SK-N-SH (cell line): ENCODE measurements at regions of chr19 and their contacts with region 1.

Region 1: DNA sequence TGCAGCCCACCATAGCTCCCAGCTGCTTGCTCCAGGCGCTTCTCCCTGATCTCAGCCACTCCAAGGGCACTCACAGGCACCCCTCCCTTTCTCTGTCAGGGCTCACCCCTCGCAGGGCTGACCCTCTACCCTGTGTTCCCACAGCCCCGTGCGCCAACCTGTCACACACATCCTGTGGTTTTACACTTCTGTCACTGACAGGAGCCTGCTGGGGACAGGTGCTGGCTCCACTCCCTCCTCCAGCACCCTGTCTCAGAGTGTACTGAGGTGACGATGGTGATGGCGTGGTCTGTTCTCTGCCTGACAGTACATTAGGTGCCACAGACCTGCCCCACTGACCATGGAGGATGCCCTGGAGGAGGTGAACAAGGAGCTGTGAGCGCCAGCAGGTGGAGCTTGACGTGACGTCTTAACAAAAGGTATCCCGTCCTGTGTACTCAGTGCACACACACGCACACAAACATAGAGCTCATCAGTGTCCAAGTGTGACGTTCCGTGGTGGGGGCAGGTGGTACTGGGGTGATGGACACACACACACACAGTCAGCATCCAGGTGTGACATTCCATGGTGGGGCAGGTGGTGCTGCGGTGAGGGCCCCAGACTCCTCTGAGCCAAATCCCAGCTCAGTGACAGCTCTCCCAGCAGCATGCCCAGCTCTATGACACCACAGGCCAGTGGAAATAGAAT is 20.9 kb downstream of the C19orf44 start:
- DNase-seq: no peak
- H3K4me3 ChIP-seq: no peak overlapping the region
- H3K27ac ChIP-seq: no peak overlapping the region
- H3K4me1 ChIP-seq: no peaks in the 10 kb centered on the region
- H3K27me3 ChIP-seq: no peaks in the 10 kb centered on the region
- CTCF ChIP-seq: no peak
- EP300 ChIP-seq: no peak
- RAD21 ChIP-seq: no peak

Region 2: DNA sequence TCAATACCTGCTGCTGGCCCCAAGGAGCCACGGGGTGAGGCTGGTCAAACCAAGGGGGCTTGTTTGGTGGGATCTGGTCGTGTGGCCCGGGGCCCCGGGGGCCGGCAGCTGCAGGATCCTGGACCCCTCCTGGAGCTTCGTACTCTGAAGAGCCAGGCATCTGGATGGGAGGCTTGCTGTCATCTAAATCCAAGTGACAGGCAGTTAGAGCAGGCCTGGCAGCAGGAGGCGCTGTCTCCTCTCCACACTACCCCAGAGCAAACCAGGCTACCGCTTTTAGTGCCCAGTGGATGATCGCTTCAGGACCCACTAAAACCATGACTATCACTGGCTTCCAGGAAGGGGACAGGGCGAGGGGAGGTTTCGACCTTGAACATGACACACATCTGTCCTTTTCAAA is 11.0 kb after region 1 on chr19:
- CTCF ChIA-PET with region 1: interaction called, 12 read pairs
- POLR2A ChIA-PET with region 1: interaction called, 4 read pairs
- DNase-seq: peak; percentile 61
- H3K4me3 ChIP-seq: no peak overlapping the region
- H3K27ac ChIP-seq: no peak overlapping the region
- H3K4me1 ChIP-seq: no peaks in the 10 kb centered on the region
- H3K27me3 ChIP-seq: no peaks in the 10 kb centered on the region
- CTCF ChIP-seq: peak; percentile 52
- EP300 ChIP-seq: no peak
- RAD21 ChIP-seq: peak; percentile 42